Activated CD8-positive, alpha-beta T cell treated with anti-CD3 and anti-CD28 coated beads for 36 hours (primary cell): ENCODE measurements at regions of chr15 and their contacts with region 1.

Region 1: GRCh38 chr15:35444557-35445204 is 101.3 kb downstream of the DPH6 start:
- DNase-seq: no peak
- ATAC-seq: no peak
- H3K4me3 Mint-ChIP-seq: no peak overlapping the region
- H3K27ac Mint-ChIP-seq: no peak overlapping the region
- H3K4me1 Mint-ChIP-seq: no peaks in the 10 kb centered on the region
- H3K27me3 Mint-ChIP-seq: no peaks in the 10 kb centered on the region
- CTCF ChIP-seq: peak; percentile 80

Region 2: DNA sequence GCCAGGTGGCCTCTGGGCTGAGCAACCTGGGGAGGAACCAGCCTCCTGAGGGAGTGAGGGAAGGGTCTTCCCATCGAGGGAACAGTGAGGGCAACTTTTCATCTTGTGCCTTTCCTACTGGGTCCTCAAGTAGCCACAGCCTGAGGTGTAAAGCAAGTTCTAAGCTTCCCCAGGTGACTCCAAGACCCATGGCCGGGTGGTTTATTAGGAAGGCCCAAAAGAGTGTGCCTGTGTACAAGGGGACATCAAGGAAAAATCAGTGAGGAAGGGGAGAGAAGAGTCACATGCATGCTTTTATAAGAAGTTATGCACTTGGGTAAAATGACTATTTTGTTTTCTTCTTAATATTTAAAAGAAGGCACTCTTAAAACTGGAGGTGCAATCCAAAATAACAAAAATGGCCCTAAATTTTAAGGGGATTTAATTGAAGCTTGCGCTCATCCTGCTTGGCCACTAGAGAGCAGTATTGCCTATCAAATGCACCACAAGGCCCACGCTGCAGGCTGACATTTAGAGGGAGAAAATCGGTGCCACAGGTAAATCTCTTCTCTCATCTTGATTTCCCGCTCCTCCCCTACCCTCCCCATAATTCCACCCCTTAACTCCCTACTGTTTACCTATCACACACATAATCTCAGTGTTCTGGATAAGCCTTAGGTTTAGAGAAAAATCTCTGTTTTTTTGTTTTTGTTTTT is 366.3 kb before region 1 on chr15:
- CTCF ChIA-PET with region 1: interaction called, 67 read pairs
- POLR2A ChIA-PET with region 1: no interaction called
- intact Hi-C with region 1: loop called (anchors 2 kb)
- DNase-seq: peak; percentile 41
- ATAC-seq: peak; percentile 53
- H3K4me3 Mint-ChIP-seq: no peak overlapping the region
- H3K27ac Mint-ChIP-seq: no peak overlapping the region
- H3K4me1 Mint-ChIP-seq: no peaks in the 10 kb centered on the region
- H3K27me3 Mint-ChIP-seq: peaks cover 10% of the 10 kb centered on the region
- CTCF ChIP-seq: peak; percentile 75

Region 3: GRCh38 chr15:35289024-35289617 is 155.6 kb before region 1 on chr15:
- CTCF ChIA-PET with region 1: interaction called, 68 read pairs
- POLR2A ChIA-PET with region 1: no interaction called
- intact Hi-C with region 1: loop called (anchors 10 kb)
- DNase-seq: no peak
- ATAC-seq: no peak
- H3K4me3 Mint-ChIP-seq: no peak overlapping the region
- H3K27ac Mint-ChIP-seq: no peak overlapping the region
- H3K4me1 Mint-ChIP-seq: no peaks in the 10 kb centered on the region
- H3K27me3 Mint-ChIP-seq: peaks cover 2% of the 10 kb centered on the region
- CTCF ChIP-seq: peak; percentile 71

Region 4: DNA sequence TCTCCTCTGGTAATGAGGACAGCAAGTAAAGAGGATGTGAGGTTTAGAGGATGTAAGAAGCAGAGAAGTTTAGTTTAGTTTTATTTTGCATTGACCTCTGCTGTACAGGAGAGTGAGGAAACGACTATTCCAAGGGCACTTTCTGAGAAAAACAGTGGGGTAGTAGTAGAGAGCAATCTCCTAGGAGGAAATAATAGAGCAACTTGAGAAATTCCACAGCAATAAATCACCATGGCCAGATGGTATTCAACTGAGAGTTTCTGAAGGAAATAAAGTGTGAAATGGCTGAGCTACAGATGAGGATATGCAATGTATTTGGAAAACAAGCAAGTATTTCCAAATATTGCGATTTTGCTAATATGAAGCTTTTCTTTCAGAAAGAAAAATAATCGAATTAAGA is 17.6 kb before region 1 on chr15:
- CTCF ChIA-PET with region 1: interaction called, 31 read pairs
- POLR2A ChIA-PET with region 1: no interaction called
- intact Hi-C with region 1: no loop called
- DNase-seq: no peak
- ATAC-seq: no peak
- H3K4me3 Mint-ChIP-seq: no peak overlapping the region
- H3K27ac Mint-ChIP-seq: no peak overlapping the region
- H3K4me1 Mint-ChIP-seq: no peaks in the 10 kb centered on the region
- H3K27me3 Mint-ChIP-seq: no peaks in the 10 kb centered on the region
- CTCF ChIP-seq: no peak

Region 5: GRCh38 chr15:35455201-35455600 is 10.5 kb after region 1 on chr15:
- CTCF ChIA-PET with region 1: interaction called, 18 read pairs
- POLR2A ChIA-PET with region 1: no interaction called
- intact Hi-C with region 1: no loop called
- DNase-seq: no peak
- ATAC-seq: no peak
- H3K4me3 Mint-ChIP-seq: no peak overlapping the region
- H3K27ac Mint-ChIP-seq: no peak overlapping the region
- H3K4me1 Mint-ChIP-seq: no peaks in the 10 kb centered on the region
- H3K27me3 Mint-ChIP-seq: no peaks in the 10 kb centered on the region
- CTCF ChIP-seq: no peak

Region 6: GRCh38 chr15:35560870-35561269 is 116.2 kb after region 1 on chr15:
- CTCF ChIA-PET with region 1: no interaction called
- POLR2A ChIA-PET with region 1: no interaction called
- intact Hi-C with region 1: no loop called
- DNase-seq: no peak
- ATAC-seq: no peak
- H3K4me3 Mint-ChIP-seq: no peak overlapping the region
- H3K27ac Mint-ChIP-seq: no peak overlapping the region
- H3K4me1 Mint-ChIP-seq: peaks cover 2% of the 10 kb centered on the region
- H3K27me3 Mint-ChIP-seq: no peaks in the 10 kb centered on the region
- CTCF ChIP-seq: no peak